MCF 10A (cell line): ENCODE measurements at regions of chr1 and their contacts with region 1.

Region 1: GRCh38 chr1:101002551-101002950 is 23.0 kb downstream of the DPH5 start:
- DNase-seq: peak; percentile 73
- H3K4me3 Mint-ChIP-seq: no peak overlapping the region
- H3K27ac Mint-ChIP-seq: peak overlapping the region; percentile 39
- H3K4me1 Mint-ChIP-seq: peaks cover 31% of the 10 kb centered on the region
- H3K27me3 Mint-ChIP-seq: no peaks in the 10 kb centered on the region
- CTCF ChIP-seq: no peak

Region 2: DNA sequence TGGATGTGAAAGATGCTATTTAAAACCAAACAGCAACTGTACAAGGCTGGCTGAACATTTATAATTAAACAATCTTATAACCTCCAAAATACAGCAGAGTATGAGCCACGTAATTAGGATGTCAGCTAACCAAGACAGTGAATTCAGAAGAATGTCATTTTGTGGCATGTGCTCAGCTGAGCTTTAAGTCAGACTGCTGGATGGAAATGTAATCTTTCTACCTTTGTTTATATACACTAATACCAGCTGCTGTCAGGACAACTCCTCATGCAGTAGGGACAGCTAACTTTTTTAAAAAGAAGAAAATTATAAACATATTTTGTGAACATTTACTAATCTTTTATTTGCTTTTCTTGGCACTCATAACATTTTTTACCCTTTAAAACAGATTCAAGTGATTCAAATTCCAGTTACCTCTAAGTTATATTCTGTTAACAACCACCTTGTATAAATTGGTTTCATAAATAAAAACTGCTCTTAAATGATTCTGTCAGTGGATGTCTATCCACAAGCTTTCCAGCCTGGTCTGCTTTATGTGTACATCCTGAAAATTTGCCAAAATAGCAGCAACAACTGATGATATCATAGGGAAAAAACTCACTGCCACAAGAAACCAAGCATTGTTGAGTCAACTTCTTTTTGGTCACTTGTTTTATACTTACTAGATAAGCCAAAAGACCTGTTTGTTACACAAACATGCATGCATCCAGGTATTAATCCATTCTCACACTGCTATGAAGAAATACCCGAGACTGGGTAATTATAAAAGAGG is 13.1 kb before region 1 on chr1:
- CTCF ChIA-PET with region 1: interaction called, 4 read pairs
- POLR2A ChIA-PET with region 1: interaction called, 13 read pairs
- intact Hi-C with region 1: no loop called
- DNase-seq: peak; percentile 45
- H3K4me3 Mint-ChIP-seq: no peak overlapping the region
- H3K27ac Mint-ChIP-seq: peak overlapping the region; percentile 51
- H3K4me1 Mint-ChIP-seq: peaks cover 10% of the 10 kb centered on the region
- H3K27me3 Mint-ChIP-seq: no peaks in the 10 kb centered on the region
- CTCF ChIP-seq: no peak

Region 3: GRCh38 chr1:101013776-101014175 is 11.2 kb after region 1 on chr1:
- CTCF ChIA-PET with region 1: interaction called, 3 read pairs
- POLR2A ChIA-PET with region 1: interaction called, 30 read pairs
- intact Hi-C with region 1: no loop called
- DNase-seq: no peak
- H3K4me3 Mint-ChIP-seq: no peak overlapping the region
- H3K27ac Mint-ChIP-seq: peak overlapping the region; percentile 61
- H3K4me1 Mint-ChIP-seq: no peaks in the 10 kb centered on the region
- H3K27me3 Mint-ChIP-seq: no peaks in the 10 kb centered on the region
- CTCF ChIP-seq: no peak